ENCODE measurements at regions of chr16 and their contacts with region 1.

Region 1: GRCh38 chr16:31754998-31755615 is 118.5 kb upstream of the ZNF267 start:
- DNase-seq: no peak
- H3K4me3 Mint-ChIP-seq: no peak overlapping the region
- H3K27ac Mint-ChIP-seq: no peak overlapping the region
- H3K4me1 Mint-ChIP-seq: no peaks in the 10 kb centered on the region
- H3K27me3 Mint-ChIP-seq: no peaks in the 10 kb centered on the region

Region 2: GRCh38 chr16:31664713-31665482 is 90.2 kb before region 1 on chr16:
- intact Hi-C with region 1: no loop called
- DNase-seq: no peak
- H3K4me3 Mint-ChIP-seq: no peak overlapping the region
- H3K27ac Mint-ChIP-seq: no peak overlapping the region
- H3K4me1 Mint-ChIP-seq: no peaks in the 10 kb centered on the region
- H3K27me3 Mint-ChIP-seq: no peaks in the 10 kb centered on the region

Region 3: DNA sequence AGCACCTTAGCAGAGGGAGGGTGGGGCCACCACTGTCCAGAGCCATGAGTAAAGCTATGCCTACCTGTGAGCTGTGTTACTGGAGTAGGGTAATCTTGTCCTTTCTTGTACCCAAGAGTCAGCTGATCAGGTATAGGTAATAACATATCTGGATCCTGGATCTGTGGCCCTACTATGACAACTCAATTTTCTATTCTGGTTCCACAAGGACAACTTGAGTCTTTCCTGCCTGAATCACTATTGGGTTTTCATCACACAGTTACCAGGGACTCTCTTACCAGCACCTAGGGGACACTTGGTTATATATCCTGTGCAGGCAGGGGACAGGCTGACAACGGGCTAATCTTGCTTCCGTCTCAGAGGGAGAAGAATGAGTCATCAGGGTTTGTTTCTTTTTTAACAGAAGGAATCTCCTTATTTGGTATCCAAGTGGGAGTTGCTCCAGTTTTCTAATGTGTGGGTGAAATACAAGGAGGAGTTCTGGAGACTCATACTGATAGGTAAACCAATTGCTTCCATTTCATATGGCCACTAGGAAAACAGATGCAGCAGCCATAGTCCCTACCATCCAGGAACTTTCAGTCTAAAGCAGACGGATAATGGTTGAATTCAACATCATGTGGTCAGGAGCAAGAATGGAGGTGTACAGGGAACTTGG is 125.3 kb after region 1 on chr16:
- intact Hi-C with region 1: loop called (anchors 10 kb)
- DNase-seq: peak; percentile 84
- H3K4me3 Mint-ChIP-seq: peak overlapping the region; percentile 90
- H3K27ac Mint-ChIP-seq: peak overlapping the region; percentile 94
- H3K4me1 Mint-ChIP-seq: peaks cover 61% of the 10 kb centered on the region
- H3K27me3 Mint-ChIP-seq: no peaks in the 10 kb centered on the region

Measured in activated CD4-positive, alpha-beta T cell treated with anti-CD3 and anti-CD28 coated beads, Interleukin-2, amount 10 ng/mL, durations not matched to agents 24 days and 14 days (primary cell).